Esophagus muscularis mucosa (tissue), 4 donors: ENCODE measurements at regions of chr17 and their contacts with region 1.

Region 1: GRCh38 chr17:66567234-66568170 is 265.1 kb downstream of the PRKCA start:
- DNase-seq: peak; percentile 94
- H3K4me3 ChIP-seq: no peak overlapping the region
- H3K27ac ChIP-seq: no peak overlapping the region
- H3K4me1 ChIP-seq: peaks cover 0 to 13% (median 7%) of the 10 kb centered on the region in 4 donors
- H3K27me3 ChIP-seq: no peaks in the 10 kb centered on the region
- CTCF ChIP-seq: peak; percentile 73 to 91 (median 74)
- EP300 ChIP-seq: no peak
- POLR2A ChIP-seq: no peak

Region 2: DNA sequence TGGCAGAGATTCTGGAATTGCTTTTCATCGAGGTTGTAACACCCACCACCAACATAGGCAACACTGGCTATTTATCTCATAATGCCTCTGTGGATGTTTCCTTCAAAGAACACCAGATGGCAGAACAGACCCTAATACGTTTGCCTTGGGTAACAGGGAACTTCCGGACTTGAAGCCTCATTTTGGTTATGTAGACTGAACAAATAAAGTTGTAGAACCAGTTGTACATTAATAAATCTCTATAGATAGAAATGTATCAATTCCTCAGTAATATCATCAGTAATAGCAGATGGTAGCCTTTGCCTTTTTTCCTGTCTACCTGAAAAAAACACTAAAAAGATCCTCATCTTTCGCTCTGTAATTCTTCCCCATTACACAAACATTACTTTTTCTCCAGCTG is 312.4 kb before region 1 on chr17:
- intact Hi-C with region 1: loop called (anchors 2 kb)
- DNase-seq: no peak
- H3K4me3 ChIP-seq: no peak overlapping the region
- H3K27ac ChIP-seq: no peak overlapping the region
- H3K4me1 ChIP-seq: peaks cover 0 to 4% (median 1%) of the 10 kb centered on the region in 4 donors
- H3K27me3 ChIP-seq: no peaks in the 10 kb centered on the region
- CTCF ChIP-seq: peak; percentile 73 to 87 (median 76)
- EP300 ChIP-seq: no peak
- POLR2A ChIP-seq: no peak

Region 3: GRCh38 chr17:66301797-66302741 is 265.4 kb before region 1 on chr17 and contains the start of gene PRKCA:
- intact Hi-C with region 1: loop called (anchors 5 kb)
- DNase-seq: no peak
- H3K4me3 ChIP-seq: peak within 1 kb of the TSS; percentile 76 to 98 (median 95)
- H3K27ac ChIP-seq: peak within 1 kb of the TSS; percentile 83 to 90 (median 87)
- H3K4me1 ChIP-seq: peaks cover 6 to 48% (median 44%) of the 10 kb centered on the region in 4 donors
- H3K27me3 ChIP-seq: no peaks in the 10 kb centered on the region
- CTCF ChIP-seq: no peak
- EP300 ChIP-seq: no peak
- POLR2A ChIP-seq: no peak
- total RNA-seq, gene PRKCA: 24.5 to 61.9 (median 40.8) TPM

Region 4: GRCh38 chr17:66441101-66441661 is 126.3 kb before region 1 on chr17:
- intact Hi-C with region 1: loop called (anchors 10 kb)
- DNase-seq: no peak
- H3K4me3 ChIP-seq: peak overlapping the region; percentile 27 to 37 (median 36)
- H3K27ac ChIP-seq: peak overlapping the region in 2 of 4 donors; percentile 14 to 27
- H3K4me1 ChIP-seq: peaks cover 0 to 47% (median 35%) of the 10 kb centered on the region in 4 donors
- H3K27me3 ChIP-seq: no peaks in the 10 kb centered on the region
- CTCF ChIP-seq: no peak
- EP300 ChIP-seq: no peak
- POLR2A ChIP-seq: no peak

Region 5: DNA sequence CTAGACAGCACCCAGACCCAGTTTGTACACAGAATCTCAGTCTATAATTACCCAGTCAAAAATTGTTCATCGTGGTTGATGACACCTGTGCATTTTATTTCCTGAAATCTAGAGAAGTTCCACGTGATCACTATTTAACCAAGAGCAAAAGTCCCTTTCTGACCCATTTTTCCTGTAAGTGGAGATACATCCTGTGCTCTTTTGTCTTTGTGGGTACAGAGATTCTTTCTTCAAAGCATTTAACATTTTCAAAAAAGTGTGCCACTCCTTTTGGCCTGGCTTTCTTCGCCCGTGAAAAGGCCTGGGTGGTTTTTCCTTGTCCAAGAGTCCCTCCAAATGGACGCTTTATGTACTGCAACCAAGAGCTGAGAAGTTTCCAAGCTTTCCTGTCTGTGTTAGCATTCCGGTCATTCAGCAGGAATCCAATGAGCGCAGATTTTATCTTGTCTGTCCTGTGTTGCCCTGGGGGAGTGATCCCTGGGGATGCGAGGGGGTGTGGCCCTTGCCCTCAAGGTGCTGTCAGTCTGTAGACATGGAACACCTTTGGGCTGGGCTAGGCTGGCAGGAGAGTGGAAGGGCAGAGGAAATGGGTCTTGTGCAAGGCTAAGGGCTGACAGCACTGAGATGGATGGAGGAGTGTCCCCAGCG is 106.3 kb after region 1 on chr17:
- intact Hi-C with region 1: loop called (anchors 5 kb)
- DNase-seq: no peak
- H3K4me3 ChIP-seq: no peak overlapping the region
- H3K27ac ChIP-seq: peak overlapping the region; percentile 0 to 60 (median 36)
- H3K4me1 ChIP-seq: peaks cover 0 to 30% (median 27%) of the 10 kb centered on the region in 4 donors
- H3K27me3 ChIP-seq: no peaks in the 10 kb centered on the region
- CTCF ChIP-seq: peak; percentile 75 to 86 (median 82)
- EP300 ChIP-seq: no peak
- POLR2A ChIP-seq: no peak